Activated T-helper 1 cell treated with anti-CD3 and anti-CD28 coated beads, Interleukin-12 subunit alpha, Interleukin-12 subunit beta, Interleukin-2, Interleukin-4 antibody, amounts not matched to agents 30 ng/mL and 10 ng/mL and 1 ng/mL, durations not matched to agents 14 hours and 24 hours and 36 hours (primary cell): ENCODE measurements at regions of chr2 and their contacts with region 1.

Region 1: DNA sequence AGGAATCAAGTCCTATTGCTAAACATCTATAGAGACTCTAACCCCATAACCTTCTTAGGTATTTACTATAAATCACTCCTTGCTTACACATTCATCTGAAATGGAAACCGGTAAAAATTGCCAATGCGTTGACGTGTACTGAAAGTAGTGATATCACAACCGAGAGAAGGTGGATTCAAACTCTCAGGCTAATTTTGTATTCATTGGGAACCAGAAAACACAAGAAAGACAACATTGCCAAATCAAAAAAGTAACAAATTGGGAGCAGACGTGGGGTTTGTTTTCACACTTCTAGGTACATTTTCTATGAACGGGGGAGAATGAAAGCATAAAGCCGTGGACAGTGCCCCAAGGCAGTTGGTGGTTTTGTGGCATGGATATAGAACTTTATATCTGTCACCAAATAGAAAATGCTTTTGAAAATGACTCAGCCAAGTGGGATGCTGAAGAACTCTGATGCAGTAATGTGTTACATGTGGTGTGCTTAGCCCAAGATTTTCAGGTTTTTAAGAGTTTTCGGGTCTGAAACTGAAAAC is 155.1 kb upstream of the RASGRP3 start:
- DNase-seq: peak; percentile 11
- H3K4me3 Mint-ChIP-seq: peak overlapping the region; percentile 41
- H3K27ac Mint-ChIP-seq: peak overlapping the region; percentile 75
- H3K4me1 Mint-ChIP-seq: peaks cover 25% of the 10 kb centered on the region
- H3K27me3 Mint-ChIP-seq: peaks cover 3% of the 10 kb centered on the region

Region 2: DNA sequence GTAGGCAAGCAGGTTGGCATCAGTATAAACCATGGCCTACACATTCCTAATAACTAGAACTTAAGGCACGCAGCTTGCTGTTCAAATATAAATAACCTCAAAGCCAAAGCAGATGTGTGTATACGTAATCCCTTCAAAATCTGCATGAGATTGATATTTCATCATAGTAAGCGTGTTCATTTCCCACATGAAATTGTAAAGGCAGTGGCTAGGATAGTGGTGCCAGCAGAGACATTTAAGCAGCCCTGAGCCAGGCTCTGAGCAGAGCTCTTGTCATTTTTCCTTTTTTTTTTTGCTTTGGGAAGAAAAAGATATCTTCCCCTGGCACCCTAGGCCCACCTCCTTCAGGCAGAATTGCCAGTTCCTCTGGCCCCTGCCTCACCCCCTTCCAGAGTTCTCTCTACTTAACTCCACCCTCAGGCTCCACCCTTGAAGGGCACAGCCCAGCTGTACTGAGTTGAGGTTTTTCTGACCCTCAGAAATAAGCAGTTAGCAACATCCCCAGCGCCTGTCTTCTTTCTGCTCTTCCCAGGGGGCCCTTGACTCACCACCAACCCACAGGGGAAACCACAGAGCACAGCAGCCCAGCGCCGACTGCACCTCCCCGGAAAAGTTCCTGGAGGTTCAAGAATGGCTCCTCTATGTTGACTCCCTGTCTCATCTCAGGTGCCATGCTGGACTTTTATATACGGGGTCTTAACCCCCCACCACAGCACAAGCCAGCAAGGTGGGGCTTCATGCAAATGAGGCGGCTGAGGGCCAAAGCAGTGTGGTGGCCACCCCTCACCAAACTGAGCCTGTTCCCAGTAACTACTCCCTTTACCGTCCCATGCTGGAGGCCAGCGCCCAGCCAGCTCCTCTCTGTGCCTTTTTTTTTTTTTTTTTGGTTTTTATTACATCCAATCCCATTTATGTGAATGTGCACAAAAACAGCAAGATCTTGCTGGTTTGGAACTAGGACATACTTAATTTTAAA is 2002.7 kb before region 1 on chr2:
- intact Hi-C with region 1: loop called (anchors 5 kb)
- DNase-seq: peak; percentile 44
- H3K4me3 Mint-ChIP-seq: peak overlapping the region; percentile 43
- H3K27ac Mint-ChIP-seq: peak overlapping the region; percentile 54
- H3K4me1 Mint-ChIP-seq: peaks cover 58% of the 10 kb centered on the region
- H3K27me3 Mint-ChIP-seq: peaks cover 4% of the 10 kb centered on the region

Region 3: GRCh38 chr2:32745191-32745590 is 576.1 kb before region 1 on chr2:
- intact Hi-C with region 1: loop called (anchors 1 kb)
- DNase-seq: no peak
- H3K4me3 Mint-ChIP-seq: no peak overlapping the region
- H3K27ac Mint-ChIP-seq: peak overlapping the region; percentile 37
- H3K4me1 Mint-ChIP-seq: peaks cover 6% of the 10 kb centered on the region
- H3K27me3 Mint-ChIP-seq: no peaks in the 10 kb centered on the region

Region 4: DNA sequence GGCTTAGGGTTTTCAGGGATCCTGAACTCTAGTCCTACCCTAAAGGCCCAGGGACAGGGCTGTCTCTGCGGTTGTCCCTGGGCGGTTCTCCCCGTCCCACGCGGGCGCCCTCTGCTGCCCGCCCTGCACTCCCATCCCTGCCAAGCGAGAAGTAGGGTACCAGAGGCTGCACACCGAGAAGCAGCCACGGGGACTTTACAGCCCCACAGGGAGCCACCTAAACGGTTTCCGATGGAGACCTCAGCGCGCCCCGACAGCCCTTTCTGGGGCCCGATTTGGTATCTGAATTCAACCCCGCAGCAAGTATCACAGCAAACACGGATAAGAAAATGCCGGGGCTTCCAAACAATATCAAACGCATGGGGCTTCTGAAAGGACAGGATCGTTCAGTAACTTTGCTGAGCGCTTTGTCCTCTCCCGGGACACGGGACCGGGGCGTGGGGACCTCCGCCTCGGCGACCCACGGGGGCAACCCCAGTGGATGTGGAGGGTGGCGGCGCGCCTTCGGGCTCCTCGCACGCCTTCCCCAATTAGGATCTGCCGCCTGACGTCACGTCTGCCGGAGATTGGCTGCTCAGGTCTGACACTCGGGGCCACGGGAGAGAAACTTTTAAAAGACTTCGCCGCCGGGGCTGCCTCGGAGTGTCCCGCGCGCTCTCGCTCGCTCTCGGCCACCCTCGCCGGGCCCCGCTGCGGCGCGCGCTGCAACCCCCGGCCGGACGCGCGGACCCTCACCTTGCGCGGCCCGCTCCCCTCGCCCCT is 374.8 kb before region 1 on chr2 and contains the start of gene LTBP1:
- intact Hi-C with region 1: loop called (anchors 5 kb)
- DNase-seq: peak; percentile 68
- H3K4me3 Mint-ChIP-seq: peak within 1 kb of the TSS; percentile 84
- H3K27ac Mint-ChIP-seq: no peak within 1 kb of the TSS
- H3K4me1 Mint-ChIP-seq: peaks cover under 1% of the 10 kb centered on the region
- H3K27me3 Mint-ChIP-seq: peaks cover 30% of the 10 kb centered on the region
- total RNA-seq, gene LTBP1: 0.12 and 0.26 TPM in 2 replicates

Region 5: DNA sequence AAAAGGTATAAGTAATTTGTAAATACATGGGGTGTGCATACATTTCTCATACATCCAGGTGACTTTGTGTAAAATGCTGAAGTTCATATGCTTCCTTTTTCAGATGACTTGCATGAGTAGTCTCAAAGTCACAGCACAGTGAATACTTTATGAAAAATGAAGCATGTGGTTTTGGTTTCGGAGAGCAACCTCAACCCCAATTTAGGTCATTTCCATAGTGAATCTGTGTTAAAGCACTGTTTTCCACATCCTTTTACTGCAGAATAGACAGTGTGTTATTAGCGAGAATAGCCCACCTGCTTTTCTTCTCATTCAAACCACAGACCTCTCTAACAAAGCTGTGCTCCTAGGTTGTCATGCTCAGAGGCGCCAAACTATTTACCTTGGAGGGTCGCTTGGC is 49.3 kb before region 1 on chr2:
- intact Hi-C with region 1: loop called (anchors 1 kb)
- DNase-seq: no peak
- H3K4me3 Mint-ChIP-seq: no peak overlapping the region
- H3K27ac Mint-ChIP-seq: no peak overlapping the region
- H3K4me1 Mint-ChIP-seq: peaks cover 8% of the 10 kb centered on the region
- H3K27me3 Mint-ChIP-seq: peaks cover 17% of the 10 kb centered on the region

Region 6: GRCh38 chr2:33354981-33355380 is 33.7 kb after region 1 on chr2:
- intact Hi-C with region 1: no loop called
- DNase-seq: no peak
- H3K4me3 Mint-ChIP-seq: no peak overlapping the region
- H3K27ac Mint-ChIP-seq: no peak overlapping the region
- H3K4me1 Mint-ChIP-seq: no peaks in the 10 kb centered on the region
- H3K27me3 Mint-ChIP-seq: no peaks in the 10 kb centered on the region

Region 7: DNA sequence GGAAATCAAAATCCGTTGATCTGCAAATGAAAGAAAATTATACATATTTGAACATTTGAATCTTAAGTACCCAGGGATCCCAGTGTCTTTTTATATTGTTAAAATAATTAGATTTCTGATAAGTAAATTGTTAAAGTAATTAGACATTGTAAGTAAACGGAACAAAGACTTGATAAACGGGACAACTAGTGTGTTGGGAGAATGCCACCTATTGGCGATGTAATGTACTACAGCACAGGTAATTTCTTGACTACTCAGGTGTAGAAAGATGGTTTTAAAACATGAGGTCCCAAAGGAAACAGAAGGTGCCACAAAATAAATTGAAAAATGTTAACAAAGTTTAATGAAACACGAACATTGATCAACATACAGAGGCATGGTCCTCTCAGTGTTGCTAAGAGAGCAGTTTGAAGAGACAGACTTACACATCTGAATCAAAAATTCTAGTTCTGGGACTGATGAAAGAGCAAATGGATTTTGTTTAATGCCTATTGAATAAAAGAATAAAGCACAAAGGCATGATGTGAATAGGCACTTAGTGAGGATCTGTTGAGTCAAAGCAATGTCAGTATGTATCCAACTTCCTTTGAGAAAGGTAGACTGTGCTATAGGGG is 51.7 kb after region 1 on chr2:
- intact Hi-C with region 1: no loop called
- DNase-seq: no peak
- H3K4me3 Mint-ChIP-seq: no peak overlapping the region
- H3K27ac Mint-ChIP-seq: no peak overlapping the region
- H3K4me1 Mint-ChIP-seq: no peaks in the 10 kb centered on the region
- H3K27me3 Mint-ChIP-seq: no peaks in the 10 kb centered on the region

Region 8: DNA sequence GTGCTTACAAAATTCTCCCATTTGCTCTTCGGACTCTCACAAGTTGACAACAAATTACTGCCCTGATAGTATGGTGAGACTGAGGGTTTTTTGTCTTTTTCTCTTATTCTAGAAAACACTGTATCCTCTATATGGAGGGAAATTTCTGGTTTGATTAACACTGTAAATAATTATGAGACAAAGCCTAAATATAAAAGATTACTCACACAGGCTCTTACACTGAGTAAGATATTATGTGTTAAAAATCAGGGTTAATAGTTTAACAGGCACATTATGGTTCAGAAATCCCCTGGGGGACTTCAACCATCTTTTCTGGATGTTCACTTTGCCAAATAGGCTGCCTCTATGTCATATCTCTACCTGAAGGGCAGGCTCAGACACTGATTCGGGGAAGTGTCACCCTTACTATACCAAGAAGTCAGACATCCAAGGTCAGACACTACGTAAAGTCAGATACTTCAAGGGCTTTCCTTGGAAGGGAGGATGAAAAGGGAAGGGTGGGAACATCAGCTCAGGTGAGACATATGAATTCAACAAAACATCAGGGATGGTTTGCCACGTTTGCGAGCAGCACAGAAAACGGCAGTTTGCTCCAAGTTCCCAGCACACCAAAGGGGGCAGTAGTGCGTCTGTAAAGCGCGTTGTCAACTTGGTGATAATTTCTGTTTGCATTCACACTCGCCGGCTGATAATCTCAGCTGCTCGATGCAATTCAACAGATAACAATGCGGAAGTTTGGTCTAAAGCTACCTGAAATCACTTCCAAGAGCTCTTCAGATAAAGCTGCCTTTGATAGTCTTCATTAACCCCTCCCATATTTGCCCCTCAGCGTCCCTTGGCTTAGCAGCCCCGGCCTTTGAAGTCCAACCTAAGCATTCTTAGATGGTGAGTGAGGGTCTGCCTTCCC is 154.2 kb after region 1 on chr2:
- intact Hi-C with region 1: loop called (anchors 2 kb)
- DNase-seq: peak; percentile 75
- H3K4me3 Mint-ChIP-seq: peak overlapping the region; percentile 92
- H3K27ac Mint-ChIP-seq: peak overlapping the region; percentile 99
- H3K4me1 Mint-ChIP-seq: peaks cover 41% of the 10 kb centered on the region
- H3K27me3 Mint-ChIP-seq: peaks cover 7% of the 10 kb centered on the region